ENCODE measurements at regions of chr1 and their contacts with region 1.

Region 1: DNA sequence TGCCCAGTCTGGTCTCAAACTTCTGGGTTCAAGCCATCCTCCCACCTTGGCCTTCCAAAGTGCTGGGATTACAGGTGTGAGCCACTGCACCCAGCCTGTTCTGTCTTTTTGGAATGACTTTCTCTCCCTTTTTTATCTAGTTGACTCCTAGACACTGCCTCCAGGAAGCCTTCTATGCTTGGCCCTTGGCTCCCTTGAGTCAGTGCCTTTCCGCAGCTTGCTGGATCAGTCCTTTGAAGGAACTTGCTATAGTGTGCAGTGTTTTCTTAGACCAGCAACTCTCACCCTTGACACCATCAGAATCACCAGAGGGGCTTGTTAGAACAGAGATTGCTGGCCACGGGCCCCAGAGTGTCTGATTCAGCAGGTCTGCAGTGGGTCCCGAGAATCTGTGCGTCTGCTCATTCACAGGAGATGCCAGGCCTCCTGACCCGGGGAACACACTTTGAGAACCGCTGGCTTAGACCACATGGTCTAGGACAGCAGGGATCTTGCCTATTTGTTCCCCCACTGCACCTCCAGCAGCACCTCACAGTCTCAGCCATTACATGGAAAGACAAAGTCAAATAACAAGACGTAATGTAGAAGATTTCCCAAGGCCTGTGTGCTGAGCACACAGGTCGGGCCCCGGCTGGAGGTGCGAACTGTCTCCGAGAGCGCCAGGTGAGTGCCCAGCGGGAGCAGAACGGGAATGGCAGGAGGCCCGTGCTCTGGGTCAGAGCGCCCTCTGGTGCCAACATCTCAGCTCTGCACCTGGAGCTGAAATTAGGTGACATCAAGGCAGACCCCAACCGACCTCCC is 27.4 kb upstream of the CTPS1 start:
- DNase-seq: peak; percentile 65 to 92 (median 80)

Region 2: DNA sequence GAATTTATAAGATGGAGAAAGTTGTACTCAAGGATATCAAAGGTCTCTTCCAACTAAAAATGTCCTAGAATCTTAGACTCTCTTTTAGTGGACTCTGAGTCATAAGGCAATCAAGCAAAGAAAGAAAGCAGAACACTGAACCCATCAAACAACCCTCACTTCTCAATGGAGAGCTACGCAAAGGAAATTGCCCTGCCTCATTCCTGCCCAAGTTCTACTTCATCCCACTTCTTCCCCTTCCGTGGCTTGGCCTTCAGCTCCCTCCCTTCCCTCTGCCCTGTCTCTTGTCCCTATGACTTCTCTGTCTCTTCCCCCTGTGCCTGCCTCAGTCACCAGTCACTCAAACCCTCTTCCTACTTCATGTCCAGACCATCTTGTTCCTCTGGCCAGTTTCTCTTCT is 345.2 kb before region 1 on chr1:
- intact Hi-C with region 1: loop called (anchors 10 kb)
- DNase-seq: no peak

Region 3: GRCh38 chr1:40884055-40884795 is 67.9 kb before region 1 on chr1:
- intact Hi-C with region 1: no loop called
- DNase-seq: no peak

Region 4: GRCh38 chr1:40986956-40987355 is 34.8 kb after region 1 on chr1:
- intact Hi-C with region 1: no loop called
- DNase-seq: no peak

Measured in head of caudate nucleus (tissue), 42 donors.